ENCODE measurements at regions of chr6 and their contacts with region 1.

Region 1: GRCh38 chr6:149513915-149514314 is 29.1 kb upstream of the ZC3H12D start:
- DNase-seq: no peak
- H3K4me3 Mint-ChIP-seq: no peak overlapping the region
- H3K27ac Mint-ChIP-seq: no peak overlapping the region
- H3K4me1 Mint-ChIP-seq: peaks cover 39% of the 10 kb centered on the region
- H3K27me3 Mint-ChIP-seq: no peaks in the 10 kb centered on the region

Region 2: DNA sequence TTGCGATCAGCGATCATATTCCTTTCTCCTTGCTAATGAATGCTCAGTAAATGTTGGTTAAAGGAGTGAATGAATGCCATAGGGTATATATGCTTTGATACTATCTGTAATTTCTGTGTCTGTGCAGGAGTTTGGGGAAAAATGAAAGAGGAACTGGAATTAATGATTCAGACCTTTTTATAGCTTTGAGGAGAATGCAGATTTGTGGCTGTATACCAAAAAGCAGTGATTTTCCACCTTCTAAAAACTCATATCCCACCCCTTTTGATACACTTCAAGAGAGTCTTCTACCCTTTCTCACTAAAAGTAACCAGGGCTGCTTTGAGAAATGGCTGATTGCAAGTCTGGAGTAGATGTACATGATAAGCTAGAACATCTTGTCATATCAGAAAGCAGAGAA is 140.4 kb before region 1 on chr6:
- intact Hi-C with region 1: no loop called
- DNase-seq: no peak
- H3K4me3 Mint-ChIP-seq: no peak overlapping the region
- H3K27ac Mint-ChIP-seq: peak overlapping the region; percentile 66
- H3K4me1 Mint-ChIP-seq: peaks cover 53% of the 10 kb centered on the region
- H3K27me3 Mint-ChIP-seq: no peaks in the 10 kb centered on the region

Region 3: DNA sequence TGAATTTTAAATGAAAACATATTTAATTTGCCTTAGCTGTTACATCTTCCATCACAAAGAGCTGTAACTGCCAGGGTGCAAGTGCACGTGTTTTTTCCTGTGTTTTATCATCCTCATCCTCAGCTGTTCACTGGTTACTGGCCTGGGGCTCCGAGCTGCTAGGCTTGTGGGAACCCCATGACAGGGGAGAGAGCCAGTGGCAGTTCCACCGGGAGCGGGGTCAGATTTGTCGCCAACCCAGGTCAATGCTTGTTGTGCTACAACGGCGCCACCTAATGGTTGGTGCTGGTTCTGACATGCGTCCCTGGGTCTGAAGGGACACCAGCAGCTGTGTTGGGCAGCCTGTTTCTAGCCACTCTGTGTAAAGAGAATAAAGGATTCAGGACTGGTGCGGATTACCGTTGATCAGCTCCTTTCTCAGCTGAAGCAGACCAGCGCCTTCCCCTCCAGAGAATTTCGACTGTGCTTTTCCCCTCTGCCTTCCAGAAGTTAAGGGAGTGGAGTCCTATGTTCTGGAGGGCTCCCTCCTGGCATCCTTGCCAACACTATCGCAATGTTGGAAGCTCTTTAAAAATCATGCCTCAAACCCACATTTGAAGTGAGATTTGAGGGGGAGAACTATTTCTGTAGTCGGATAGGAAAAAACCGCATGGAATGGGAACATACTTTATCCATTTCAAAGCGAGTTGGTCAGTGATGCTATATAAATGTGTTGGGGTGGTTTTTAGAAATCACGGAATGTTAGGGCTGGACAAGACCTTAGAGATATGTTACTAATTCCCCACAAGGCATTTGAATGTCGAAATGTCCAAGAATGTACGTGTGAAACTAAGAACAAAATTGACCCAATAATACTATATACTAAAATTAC is 81.8 kb before region 1 on chr6:
- intact Hi-C with region 1: loop called (anchors 1 kb)
- DNase-seq: peak; percentile 78
- H3K4me3 Mint-ChIP-seq: no peak overlapping the region
- H3K27ac Mint-ChIP-seq: peak overlapping the region; percentile 64
- H3K4me1 Mint-ChIP-seq: peaks cover 14% of the 10 kb centered on the region
- H3K27me3 Mint-ChIP-seq: no peaks in the 10 kb centered on the region

Measured in activated T-helper 2 cell treated with anti-CD3 and anti-CD28 coated beads, Interferon-gamma antibody, Interleukin-2, Interleukin-4, amounts not matched to agents 10 μg/mL and 5 μg/mL and 100 μg/mL, durations not matched to agents 14 hours and 24 hours and 36 hours (primary cell).